ENCODE measurements at regions of chr13 and their contacts with region 1.

Region 1: DNA sequence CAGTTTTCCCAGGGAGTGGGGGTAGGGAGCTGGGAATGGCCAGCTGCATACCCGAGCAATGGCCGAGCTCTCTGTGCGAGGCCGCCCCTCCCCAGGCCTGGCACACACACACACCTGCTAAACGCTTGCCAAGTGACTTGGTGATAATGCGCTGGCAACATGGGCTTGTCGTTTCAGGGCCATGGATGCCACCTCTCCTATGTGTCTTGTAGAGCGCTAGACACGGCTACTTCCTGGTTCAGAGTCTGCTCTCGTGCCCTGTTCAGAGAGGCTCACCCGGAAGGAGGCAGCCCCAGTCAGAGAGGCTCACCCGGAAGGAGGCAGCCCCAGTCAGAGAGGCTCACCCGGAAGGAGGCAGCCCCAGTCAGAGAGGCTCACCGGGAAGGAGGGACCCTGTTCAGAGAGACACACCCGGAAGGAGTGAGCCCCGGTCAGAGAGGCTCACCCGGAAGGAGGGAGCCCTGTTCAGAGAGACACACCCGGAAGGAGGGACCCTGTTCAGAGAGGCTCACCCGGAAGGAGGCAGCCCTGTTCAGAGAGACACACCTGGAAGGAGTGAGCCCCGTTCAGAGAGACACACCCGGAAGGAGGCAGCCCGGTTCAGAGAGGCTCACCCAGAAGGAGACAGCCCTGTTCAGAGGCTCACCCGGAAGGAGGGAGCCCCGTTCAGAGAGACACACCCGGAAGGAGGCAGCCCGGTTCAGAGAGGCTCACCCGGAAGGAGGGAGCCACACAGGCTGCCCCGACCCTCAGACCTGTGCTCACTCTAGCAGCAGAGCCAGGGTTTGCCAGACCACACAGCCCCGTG is 4.2 kb downstream of the ADPRHL1 start:
- DNase-seq: peak; percentile 92 to 99
- H3K4me3 ChIP-seq: peak overlapping the region; percentile 78
- H3K27ac ChIP-seq: peak overlapping the region; percentile 84
- H3K4me1 ChIP-seq: peaks cover 18% of the 10 kb centered on the region
- H3K27me3 ChIP-seq: no peaks in the 10 kb centered on the region
- CTCF ChIP-seq: no peak

Region 2: DNA sequence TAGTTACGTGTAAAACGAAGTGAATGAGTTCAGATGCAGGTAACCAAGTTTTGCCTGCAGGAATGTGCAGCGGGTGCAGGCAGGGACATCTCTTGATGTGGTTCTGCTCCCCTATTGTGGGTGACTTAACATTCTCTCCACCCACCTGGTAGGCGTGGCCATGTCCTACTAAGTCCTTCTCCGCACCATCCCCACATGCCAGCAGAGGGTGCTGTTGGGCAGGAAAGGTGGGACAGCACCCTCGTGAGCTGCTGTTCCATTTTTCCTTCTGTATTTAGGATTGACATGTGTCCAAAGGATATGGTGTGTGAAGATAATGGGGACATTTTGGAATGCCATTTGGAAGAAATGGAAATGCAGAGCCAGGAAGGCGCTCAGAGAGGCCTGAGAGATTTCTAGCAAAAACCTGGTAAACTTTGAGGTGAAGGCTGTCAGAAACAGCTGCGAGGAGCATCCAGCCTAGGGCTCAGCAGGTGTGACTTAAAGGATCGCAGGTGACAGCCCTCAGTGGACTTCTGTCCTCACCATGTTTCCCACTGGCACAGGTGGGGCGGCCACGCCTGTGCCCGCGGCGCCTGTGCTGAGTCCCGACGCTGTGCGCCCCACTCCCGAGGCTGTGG is 506.3 kb before region 1 on chr13:
- CTCF ChIA-PET with region 1: no interaction called
- POLR2A ChIA-PET with region 1: no interaction called
- intact Hi-C with region 1: loop called (anchors 5 kb)
- DNase-seq: peak; percentile 91 to 93
- H3K4me3 ChIP-seq: peak overlapping the region; percentile 68; the same call in 1 of the 2 replicates
- H3K27ac ChIP-seq: no peak overlapping the region
- H3K4me1 ChIP-seq: 0 out of 2 replicates have a peak, but pooled peaks cover 3% of the 10 kb centered on the region
- H3K27me3 ChIP-seq: no peaks in the 10 kb centered on the region
- CTCF ChIP-seq: peak; percentile 98

Region 3: DNA sequence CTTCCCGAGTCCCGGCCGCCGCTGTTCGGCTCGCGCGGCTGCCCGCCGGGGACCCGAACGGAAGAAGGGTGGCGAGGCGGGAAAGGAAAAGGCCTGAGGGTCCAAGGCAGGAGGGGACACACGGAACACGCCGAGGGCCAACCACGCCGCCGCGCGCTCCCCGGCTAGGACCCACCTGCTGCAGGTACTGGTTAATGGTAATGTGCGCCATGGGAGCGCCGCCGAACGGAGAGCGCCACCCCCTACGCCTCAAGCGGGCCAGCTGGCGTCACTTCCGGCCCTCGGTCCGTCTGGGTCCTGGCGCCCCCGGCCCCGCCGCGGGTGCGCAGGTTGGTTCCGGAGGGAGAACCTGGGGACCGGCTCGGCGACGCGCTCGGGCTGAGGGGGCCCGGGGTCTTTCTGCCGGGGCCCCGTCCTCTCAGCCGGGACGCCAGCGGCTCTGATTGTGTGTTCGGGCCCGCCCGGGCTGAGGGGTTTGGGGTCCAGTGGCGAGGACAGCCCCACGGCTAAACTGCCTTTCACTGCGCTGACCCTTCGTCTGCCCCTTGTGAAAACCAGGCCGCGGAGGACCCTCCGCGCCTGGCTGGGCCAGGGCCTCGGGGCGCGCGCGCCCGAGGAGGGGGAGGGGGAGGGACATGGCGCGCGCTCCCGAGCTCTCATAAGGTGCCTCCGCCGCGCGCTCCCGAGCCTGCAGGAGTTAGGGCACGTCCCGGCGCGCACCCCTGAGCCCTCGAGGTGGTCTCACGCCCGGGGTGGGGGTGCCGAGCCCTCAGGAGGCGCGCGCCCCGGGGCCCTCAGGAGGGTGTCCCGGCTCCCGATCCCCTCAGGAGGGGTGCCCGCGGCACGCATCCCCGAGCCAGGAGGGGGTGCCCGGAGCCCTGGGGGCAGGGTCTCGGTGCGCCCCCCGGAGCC is 240.4 kb before region 1 on chr13 and contains the start of gene PCID2:
- CTCF ChIA-PET with region 1: no interaction called
- POLR2A ChIA-PET with region 1: no interaction called
- intact Hi-C with region 1: loop called (anchors 1 kb)
- DNase-seq: peak; percentile 81 to 88
- H3K4me3 ChIP-seq: peak within 1 kb of the TSS; percentile 97
- H3K27ac ChIP-seq: peak within 1 kb of the TSS; percentile 90
- H3K4me1 ChIP-seq: peaks cover 40% of the 10 kb centered on the region
- H3K27me3 ChIP-seq: no peaks in the 10 kb centered on the region
- CTCF ChIP-seq: no peak
- total RNA-seq, gene PCID2: 48.3 and 71.8 TPM in 2 replicates

Region 4: DNA sequence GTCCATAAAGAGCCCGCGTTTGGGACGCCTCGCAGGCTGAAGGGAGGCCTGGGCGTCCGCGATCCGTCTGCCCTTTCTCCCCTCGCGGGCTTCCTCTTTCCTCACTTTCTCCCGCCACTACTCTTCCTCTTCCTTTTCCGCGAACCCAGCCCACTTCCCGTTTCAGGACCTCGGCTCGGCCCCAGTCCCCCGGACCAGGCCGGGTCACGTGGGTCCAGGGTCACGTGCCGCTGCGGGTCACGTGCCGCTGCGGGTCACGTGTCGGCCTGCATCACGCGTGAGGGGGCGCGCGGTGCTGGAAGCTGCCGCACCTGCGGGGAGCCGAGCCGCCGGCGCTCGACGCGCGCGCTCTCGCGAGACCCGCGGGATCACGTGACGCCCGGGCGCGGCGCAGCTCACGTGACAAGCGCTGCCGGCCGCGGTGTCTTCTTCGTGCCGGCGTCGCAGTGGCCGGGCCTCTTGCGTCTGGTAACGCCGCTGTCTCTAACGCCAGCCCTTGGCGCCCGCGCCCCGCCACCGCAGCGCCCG is 152.2 kb before region 1 on chr13 and contains the start of gene LAMP1:
- CTCF ChIA-PET with region 1: no interaction called
- POLR2A ChIA-PET with region 1: interaction called, 31 read pairs
- intact Hi-C with region 1: loop called (anchors 10 kb)
- DNase-seq: peak; percentile 87 to 98
- H3K4me3 ChIP-seq: peak within 1 kb of the TSS; percentile 78
- H3K27ac ChIP-seq: peak within 1 kb of the TSS; percentile 70
- H3K4me1 ChIP-seq: peaks cover 25% of the 10 kb centered on the region
- H3K27me3 ChIP-seq: no peaks in the 10 kb centered on the region
- CTCF ChIP-seq: no peak
- total RNA-seq, gene LAMP1: 186 and 263 TPM in 2 replicates

Region 5: GRCh38 chr13:113393563-113394338 is 55.3 kb before region 1 on chr13:
- CTCF ChIA-PET with region 1: no interaction called
- POLR2A ChIA-PET with region 1: no interaction called
- intact Hi-C with region 1: loop called (anchors 5 kb)
- DNase-seq: peak; percentile 53 to 85
- H3K4me3 ChIP-seq: peak overlapping the region; percentile 59
- H3K27ac ChIP-seq: no peak overlapping the region
- H3K4me1 ChIP-seq: 0 out of 2 replicates have a peak, but pooled peaks cover 4% of the 10 kb centered on the region
- H3K27me3 ChIP-seq: peaks cover 28% of the 10 kb centered on the region
- CTCF ChIP-seq: peak; percentile 61; the same call in 1 of the 2 replicates

Region 6: GRCh38 chr13:113410472-113411201 is 38.5 kb before region 1 on chr13:
- CTCF ChIA-PET with region 1: no interaction called
- POLR2A ChIA-PET with region 1: no interaction called
- intact Hi-C with region 1: loop called (anchors 1 kb)
- DNase-seq: peak; percentile 71 to 95
- H3K4me3 ChIP-seq: peak overlapping the region; percentile 54
- H3K27ac ChIP-seq: peak overlapping the region; percentile 83
- H3K4me1 ChIP-seq: peaks cover 21% of the 10 kb centered on the region
- H3K27me3 ChIP-seq: peaks cover 29% of the 10 kb centered on the region
- CTCF ChIP-seq: no peak

Region 7: DNA sequence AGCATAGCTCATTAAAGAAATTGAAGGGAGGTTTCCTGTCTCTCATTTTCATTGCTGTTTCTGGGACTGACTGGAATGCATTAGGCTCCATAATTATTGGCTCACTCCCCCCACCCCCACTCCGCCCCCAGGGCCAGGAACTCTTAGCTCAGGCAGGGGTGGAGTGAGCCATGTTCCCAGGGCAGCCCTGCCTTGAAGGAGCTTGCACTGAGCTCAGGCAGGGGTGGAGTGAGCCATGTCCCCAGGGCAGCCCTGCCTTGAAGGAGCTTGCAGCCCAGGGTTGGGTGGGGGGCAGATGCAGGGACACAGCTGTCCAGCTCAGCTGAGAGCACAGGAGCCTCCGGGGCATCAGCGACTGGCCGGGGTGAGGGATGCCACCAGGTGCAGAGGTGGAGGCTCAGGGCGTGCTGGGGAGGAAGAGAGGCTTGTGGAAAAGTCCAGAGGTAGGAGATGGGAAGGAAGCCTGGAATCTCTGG is 96.4 kb after region 1 on chr13:
- CTCF ChIA-PET with region 1: no interaction called
- POLR2A ChIA-PET with region 1: no interaction called
- intact Hi-C with region 1: no loop called
- DNase-seq: peak; percentile 50 to 74
- H3K4me3 ChIP-seq: no peak overlapping the region
- H3K27ac ChIP-seq: no peak overlapping the region
- H3K4me1 ChIP-seq: peaks cover 23% of the 10 kb centered on the region
- H3K27me3 ChIP-seq: no peaks in the 10 kb centered on the region
- CTCF ChIP-seq: no peak

Region 8: DNA sequence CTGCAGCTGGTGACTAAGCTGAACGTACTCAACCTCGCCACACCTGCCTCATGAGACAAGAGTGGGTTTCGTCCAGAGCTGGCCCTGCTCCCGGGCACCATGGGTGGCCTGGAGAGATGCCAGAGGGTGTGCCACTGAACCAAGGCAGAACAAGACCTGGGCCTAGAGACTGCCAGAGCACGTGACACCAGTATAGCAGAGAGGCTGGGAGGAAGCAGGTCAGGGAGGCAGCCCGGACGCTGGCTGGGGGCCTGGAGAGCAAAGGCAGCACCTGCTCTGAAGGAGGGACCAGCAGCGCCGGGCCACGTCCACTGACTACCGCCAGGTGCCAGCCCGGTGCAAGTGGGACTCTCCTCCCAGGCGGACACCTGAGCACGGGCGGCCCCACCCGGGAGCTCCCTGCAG is 532.1 kb after region 1 on chr13:
- CTCF ChIA-PET with region 1: interaction called, 11 read pairs
- POLR2A ChIA-PET with region 1: no interaction called
- intact Hi-C with region 1: no loop called
- DNase-seq: peak; percentile 98 to 99
- H3K4me3 ChIP-seq: no peak overlapping the region
- H3K27ac ChIP-seq: peak overlapping the region; percentile 63
- H3K4me1 ChIP-seq: peaks cover 36% of the 10 kb centered on the region
- H3K27me3 ChIP-seq: no peaks in the 10 kb centered on the region
- CTCF ChIP-seq: no peak; the same call in 1 of the 2 replicates